Head of caudate nucleus (tissue), 42 donors: ENCODE measurements at regions of chr6 and their contacts with region 1.

Region 1: GRCh38 chr6:53986165-53986720 is 125.0 kb upstream of the MLIP start:
- DNase-seq: peak in 41 of 42 donors; percentile 9 to 76 (median 53)

Region 2: GRCh38 chr6:54010340-54011276 is 24.4 kb after region 1 on chr6:
- intact Hi-C with region 1: no loop called
- DNase-seq: no peak

Region 3: GRCh38 chr6:55239099-55239498 is 1252.9 kb after region 1 on chr6:
- intact Hi-C with region 1: loop called (anchors 10 kb)
- DNase-seq: no peak